HepG2 (cell line): ENCODE measurements at regions of chr12 and their contacts with region 1.

Region 1: DNA sequence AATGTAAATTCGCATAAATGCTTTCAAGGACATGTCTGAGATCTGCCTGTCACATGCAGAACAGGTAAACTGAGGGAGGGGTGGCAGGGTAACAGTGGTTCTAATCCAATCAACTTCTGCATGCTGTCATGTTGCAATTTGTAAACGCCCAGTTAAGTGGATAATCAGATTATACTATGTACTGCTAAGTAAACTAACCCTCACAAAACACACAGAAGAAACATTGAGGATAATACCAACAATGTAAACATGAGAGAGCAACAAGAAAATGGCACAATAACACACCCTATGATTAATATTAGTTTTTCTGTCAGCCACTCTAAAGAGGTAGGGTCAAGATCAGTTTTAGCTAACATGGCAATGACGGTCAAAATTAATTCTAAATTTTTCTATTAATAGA is 123.7 kb downstream of the KIF21A start:
- DNase-seq: no peak
- ATAC-seq: peak; percentile 39; the same call in 1 of the 3 replicates
- H3K4me3 ChIP-seq: no peak overlapping the region
- H3K27ac ChIP-seq: no peak overlapping the region
- H3K4me1 ChIP-seq: 0 out of 2 replicates have a peak, but pooled peaks cover 5% of the 10 kb centered on the region
- H3K27me3 ChIP-seq: no peaks in the 10 kb centered on the region
- CTCF ChIP-seq: no peak
- EP300 ChIP-seq: no peak
- POLR2A ChIP-seq: no peak
- RAD21 ChIP-seq: no peak

Region 2: GRCh38 chr12:39173726-39174125 is 145.5 kb before region 1 on chr12:
- CTCF ChIA-PET with region 1: no interaction called
- POLR2A ChIA-PET with region 1: no interaction called
- in situ Hi-C with region 1: no loop called
- intact Hi-C with region 1: no loop called
- DNase-seq: no peak
- ATAC-seq: no peak
- H3K4me3 ChIP-seq: no peak overlapping the region
- H3K27ac ChIP-seq: no peak overlapping the region
- H3K4me1 ChIP-seq: no peaks in the 10 kb centered on the region
- H3K27me3 ChIP-seq: no peaks in the 10 kb centered on the region
- CTCF ChIP-seq: no peak
- EP300 ChIP-seq: no peak
- POLR2A ChIP-seq: no peak
- RAD21 ChIP-seq: no peak

Region 3: GRCh38 chr12:39619660-39620433 is 300.7 kb after region 1 on chr12 and contains the start of gene ABCD2:
- CTCF ChIA-PET with region 1: interaction called, 3 read pairs
- POLR2A ChIA-PET with region 1: no interaction called
- in situ Hi-C with region 1: no loop called
- intact Hi-C with region 1: loop called (anchors 1 kb)
- DNase-seq: peak; percentile 32
- ATAC-seq: peak; percentile 99
- H3K4me3 ChIP-seq: peak within 1 kb of the TSS in 2 of 3 experiments; percentile 40 to 50; a peak in 4 of 6 replicates
- H3K27ac ChIP-seq: no peak within 1 kb of the TSS
- H3K4me1 ChIP-seq: peaks cover 21% of the 10 kb centered on the region
- H3K27me3 ChIP-seq: no peaks in the 10 kb centered on the region; a peak in 2 of 5 replicates
- CTCF ChIP-seq: peak; percentile 41
- EP300 ChIP-seq: no peak
- POLR2A ChIP-seq: no peak
- RAD21 ChIP-seq: no peak
- total RNA-seq, gene ABCD2: not detected in 2 replicates

Region 4: GRCh38 chr12:39692258-39692853 is 373.2 kb after region 1 on chr12:
- CTCF ChIA-PET with region 1: no interaction called
- POLR2A ChIA-PET with region 1: no interaction called
- in situ Hi-C with region 1: no loop called
- intact Hi-C with region 1: loop called (anchors 1 kb)
- DNase-seq: no peak
- ATAC-seq: no peak
- H3K4me3 ChIP-seq: no peak overlapping the region
- H3K27ac ChIP-seq: no peak overlapping the region
- H3K4me1 ChIP-seq: no peaks in the 10 kb centered on the region
- H3K27me3 ChIP-seq: no peaks in the 10 kb centered on the region
- CTCF ChIP-seq: no peak
- EP300 ChIP-seq: no peak
- POLR2A ChIP-seq: no peak
- RAD21 ChIP-seq: no peak